Endothelial cell of umbilical vein (primary cell): ENCODE measurements at regions of chr1 and their contacts with region 1.

Region 1: GRCh38 chr1:112544011-112544688 is 35.4 kb downstream of the WNT2B start:
- DNase-seq: peak; percentile 92
- H3K4me3 ChIP-seq: peak overlapping the region in 1 of 3 experiments; percentile 27
- H3K27ac ChIP-seq: peak overlapping the region; percentile 99
- H3K4me1 ChIP-seq: peaks cover 27% of the 10 kb centered on the region
- H3K27me3 ChIP-seq: no peaks in the 10 kb centered on the region
- CTCF ChIP-seq: no peak
- POLR2A ChIP-seq: peak; percentile 32

Region 2: GRCh38 chr1:112554411-112554810 is 10.3 kb after region 1 on chr1:
- CTCF ChIA-PET with region 1: interaction called, 10 read pairs
- POLR2A ChIA-PET with region 1: no interaction called
- dilution Hi-C with region 1: no loop called
- intact Hi-C with region 1: no loop called
- DNase-seq: no peak
- H3K4me3 ChIP-seq: no peak overlapping the region
- H3K27ac ChIP-seq: no peak overlapping the region
- H3K4me1 ChIP-seq: no peaks in the 10 kb centered on the region
- H3K27me3 ChIP-seq: no peaks in the 10 kb centered on the region
- CTCF ChIP-seq: no peak
- POLR2A ChIP-seq: no peak

Region 3: GRCh38 chr1:112564081-112564480 is 19.9 kb after region 1 on chr1:
- CTCF ChIA-PET with region 1: interaction called, 4 read pairs
- POLR2A ChIA-PET with region 1: interaction called, 3 read pairs
- dilution Hi-C with region 1: no loop called
- intact Hi-C with region 1: loop called (anchors 2 kb)
- DNase-seq: no peak
- H3K4me3 ChIP-seq: no peak overlapping the region
- H3K27ac ChIP-seq: peak overlapping the region; percentile 11
- H3K4me1 ChIP-seq: peaks cover 8% of the 10 kb centered on the region
- H3K27me3 ChIP-seq: no peaks in the 10 kb centered on the region
- CTCF ChIP-seq: no peak
- POLR2A ChIP-seq: no peak

Region 4: DNA sequence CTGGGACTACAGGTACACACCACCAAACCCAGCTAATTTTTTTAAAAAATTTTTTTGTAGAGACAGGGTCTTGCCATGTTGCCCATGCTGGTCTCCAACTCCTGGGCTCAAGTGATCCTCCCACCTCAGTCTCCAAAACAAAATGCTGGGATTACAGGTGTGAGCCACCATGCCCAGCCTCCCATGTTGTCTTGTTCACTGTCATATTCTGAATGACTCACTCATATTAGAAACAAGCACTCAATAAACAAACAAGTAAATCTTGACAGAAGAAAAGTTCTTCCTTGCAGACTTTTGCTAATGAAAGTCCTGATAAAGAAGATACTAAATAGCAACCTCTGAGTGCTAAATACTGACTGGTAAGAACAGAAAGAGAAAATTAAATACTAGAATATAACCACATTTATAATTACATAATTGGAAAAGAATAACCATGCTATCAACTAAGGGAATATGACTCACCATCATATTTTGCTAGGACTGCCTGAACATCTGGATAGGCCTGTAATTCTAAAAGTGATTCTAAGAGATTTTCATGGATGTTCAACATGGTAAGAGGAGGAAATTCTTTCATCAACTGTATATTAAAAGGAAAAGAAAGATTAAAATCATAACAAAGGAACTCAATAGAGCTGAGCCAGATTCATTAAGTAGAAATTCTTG is 37.5 kb after region 1 on chr1:
- CTCF ChIA-PET with region 1: no interaction called
- POLR2A ChIA-PET with region 1: no interaction called
- dilution Hi-C with region 1: no loop called
- intact Hi-C with region 1: no loop called
- DNase-seq: peak; percentile 14
- H3K4me3 ChIP-seq: no peak overlapping the region
- H3K27ac ChIP-seq: no peak overlapping the region
- H3K4me1 ChIP-seq: peaks cover 3% of the 10 kb centered on the region
- H3K27me3 ChIP-seq: no peaks in the 10 kb centered on the region
- CTCF ChIP-seq: no peak
- POLR2A ChIP-seq: no peak

Region 5: DNA sequence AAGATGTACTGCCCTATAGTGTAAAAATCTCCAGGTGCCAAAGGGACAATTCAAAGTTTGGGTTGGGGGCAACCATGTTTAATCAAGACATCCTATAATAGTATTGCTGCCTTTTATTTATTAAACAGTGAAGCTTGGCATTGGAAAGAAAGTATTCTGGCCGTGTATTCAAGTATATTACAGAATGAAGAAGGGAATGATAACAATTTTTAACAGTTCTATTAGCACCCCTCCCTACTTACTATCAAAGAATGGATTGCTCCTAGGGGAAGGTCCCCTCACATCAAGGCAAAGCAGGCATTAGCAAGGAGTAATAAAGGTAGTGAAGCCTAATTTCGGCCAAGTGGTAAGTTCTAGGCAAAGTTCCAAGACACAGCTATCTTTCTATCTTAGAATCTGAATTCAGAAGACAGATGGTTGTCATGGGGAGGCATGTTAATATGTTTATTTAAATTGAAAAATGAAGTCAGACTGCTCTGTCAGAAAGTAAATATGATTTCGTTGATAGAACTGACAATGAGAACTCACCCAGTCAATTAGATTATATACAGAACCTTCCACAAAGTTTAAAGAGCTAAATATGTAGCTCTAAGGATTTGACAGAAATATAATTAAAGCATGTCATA is 50.2 kb after region 1 on chr1:
- CTCF ChIA-PET with region 1: no interaction called
- POLR2A ChIA-PET with region 1: no interaction called
- dilution Hi-C with region 1: no loop called
- intact Hi-C with region 1: loop called (anchors 5 kb)
- DNase-seq: no peak
- H3K4me3 ChIP-seq: no peak overlapping the region
- H3K27ac ChIP-seq: no peak overlapping the region
- H3K4me1 ChIP-seq: peaks cover 20% of the 10 kb centered on the region
- H3K27me3 ChIP-seq: no peaks in the 10 kb centered on the region
- CTCF ChIP-seq: no peak
- POLR2A ChIP-seq: no peak

Region 6: GRCh38 chr1:112706908-112707663 is 162.9 kb after region 1 on chr1 and contains the start of gene RHOC:
- CTCF ChIA-PET with region 1: no interaction called
- POLR2A ChIA-PET with region 1: interaction called, 3 read pairs
- dilution Hi-C with region 1: no loop called
- intact Hi-C with region 1: loop called (anchors 2 kb)
- DNase-seq: peak; percentile 88
- H3K4me3 ChIP-seq: peak within 1 kb of the TSS; percentile 81 to 90 (median 89)
- H3K27ac ChIP-seq: peak within 1 kb of the TSS; percentile 88
- H3K4me1 ChIP-seq: peaks cover 40% of the 10 kb centered on the region
- H3K27me3 ChIP-seq: no peaks in the 10 kb centered on the region
- CTCF ChIP-seq: peak; percentile 97 to 98
- POLR2A ChIP-seq: peak; percentile 83
- total RNA-seq, gene RHOC: 652 and 699 TPM in 2 replicates